ENCODE measurements at regions of chr7 and their contacts with region 1.

Region 1: DNA sequence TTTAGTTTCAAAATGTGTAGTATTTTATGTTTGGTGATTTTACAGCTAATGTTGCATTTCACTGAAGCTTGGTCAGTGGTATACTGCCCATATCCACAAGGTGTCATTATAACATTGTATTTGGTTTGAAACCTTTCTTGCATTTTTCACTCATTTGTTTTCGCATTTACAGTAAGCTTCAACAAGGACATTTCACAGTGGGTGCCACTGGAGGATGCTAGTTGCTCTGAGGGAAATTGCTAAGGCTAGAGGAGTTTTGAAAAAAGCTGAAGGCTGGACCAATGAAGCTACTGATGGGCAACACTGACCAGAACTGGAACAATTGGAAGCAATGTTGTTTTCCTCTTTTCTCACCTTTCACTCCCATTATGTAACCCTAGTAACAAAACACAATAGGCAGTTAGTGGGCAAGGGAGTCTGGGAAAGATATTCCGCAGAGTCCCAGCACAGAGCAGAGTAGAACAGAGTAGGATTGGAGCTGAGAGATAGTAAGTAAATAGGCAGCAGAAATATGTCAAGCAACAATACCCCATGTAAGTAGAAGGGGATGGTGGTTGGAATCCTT is 23.6 kb upstream of the SRI start:
- DNase-seq: peak; percentile 51
- H3K4me3 ChIP-seq: no peak overlapping the region; a peak in 1 of 4 replicates
- H3K27ac ChIP-seq: no peak overlapping the region
- H3K4me1 ChIP-seq: peaks cover 0 to 4% of the 10 kb centered on the region in 2 experiments; a peak in 2 of 4 replicates
- H3K27me3 ChIP-seq: no peaks in the 10 kb centered on the region
- CTCF ChIP-seq: peak; percentile 96
- EP300 ChIP-seq: no peak
- RAD21 ChIP-seq: peak; percentile 99

Region 2: DNA sequence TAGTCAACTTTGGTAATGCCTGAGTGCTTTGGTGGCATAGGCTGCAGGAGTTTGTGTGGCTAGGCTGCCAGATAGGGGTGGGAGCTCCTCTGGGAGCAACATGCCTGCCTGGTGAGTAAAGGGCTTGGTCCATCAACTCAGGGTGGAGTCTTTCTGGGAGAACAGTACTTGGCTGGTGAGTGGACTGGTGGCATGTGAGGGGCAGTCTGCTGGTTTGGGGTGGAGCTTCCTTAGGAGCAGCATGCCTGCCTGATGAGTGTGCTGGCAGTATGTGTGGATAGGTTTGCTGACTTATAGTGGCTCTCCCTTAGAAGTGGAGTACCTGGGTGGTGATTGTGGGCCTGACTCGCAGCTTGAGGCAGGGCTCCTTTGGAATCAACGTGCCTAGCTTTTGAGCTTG is 11.3 kb after region 1 on chr7:
- CTCF ChIA-PET with region 1: interaction called, 31 read pairs
- POLR2A ChIA-PET with region 1: no interaction called
- DNase-seq: no peak
- H3K4me3 ChIP-seq: no peak overlapping the region
- H3K27ac ChIP-seq: no peak overlapping the region
- H3K4me1 ChIP-seq: no peaks in the 10 kb centered on the region
- H3K27me3 ChIP-seq: no peaks in the 10 kb centered on the region
- CTCF ChIP-seq: no peak
- EP300 ChIP-seq: no peak
- RAD21 ChIP-seq: no peak

Region 3: DNA sequence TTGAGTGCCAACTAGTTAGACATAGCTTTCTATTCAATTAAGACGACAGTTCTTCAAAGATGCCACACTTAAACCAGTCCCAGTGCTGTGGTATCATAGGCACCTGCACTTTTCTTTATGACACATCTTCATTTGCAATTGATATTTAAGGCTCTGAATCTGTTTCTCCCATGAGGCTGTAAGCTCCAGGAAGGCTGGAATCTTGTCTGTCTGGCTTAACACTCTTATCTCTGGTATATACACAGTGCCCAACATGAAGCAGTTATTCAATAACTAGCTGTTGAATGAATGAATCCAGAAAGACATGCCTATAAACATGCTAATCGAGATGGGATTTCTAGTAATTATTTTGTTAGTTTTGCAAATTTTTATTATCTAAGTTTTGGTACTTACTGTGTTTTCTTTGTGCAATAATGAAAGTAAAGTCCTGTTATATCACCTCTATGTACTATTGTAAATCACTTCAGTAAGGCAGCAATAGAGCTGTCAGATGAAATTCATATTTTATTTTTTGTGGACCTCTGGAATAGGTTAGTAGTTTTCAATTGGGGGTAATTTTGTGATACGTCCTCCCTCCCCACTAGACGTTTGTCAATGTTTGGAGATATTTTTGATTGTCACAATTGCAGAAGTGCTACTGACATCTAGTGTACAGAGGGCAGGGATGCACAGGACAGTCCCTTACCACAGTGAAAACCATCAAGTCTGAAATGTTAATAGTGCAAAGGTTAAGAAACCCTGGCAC is 114.5 kb after region 1 on chr7:
- CTCF ChIA-PET with region 1: interaction called, 52 read pairs
- POLR2A ChIA-PET with region 1: no interaction called
- DNase-seq: peak; percentile 9
- H3K4me3 ChIP-seq: peak overlapping the region; percentile 16 to 19; a peak in 2 of 4 replicates
- H3K27ac ChIP-seq: no peak overlapping the region
- H3K4me1 ChIP-seq: no peaks in the 10 kb centered on the region; a peak in 2 of 4 replicates
- H3K27me3 ChIP-seq: no peaks in the 10 kb centered on the region
- CTCF ChIP-seq: peak; percentile 60
- EP300 ChIP-seq: no peak
- RAD21 ChIP-seq: peak; percentile 75

Region 4: DNA sequence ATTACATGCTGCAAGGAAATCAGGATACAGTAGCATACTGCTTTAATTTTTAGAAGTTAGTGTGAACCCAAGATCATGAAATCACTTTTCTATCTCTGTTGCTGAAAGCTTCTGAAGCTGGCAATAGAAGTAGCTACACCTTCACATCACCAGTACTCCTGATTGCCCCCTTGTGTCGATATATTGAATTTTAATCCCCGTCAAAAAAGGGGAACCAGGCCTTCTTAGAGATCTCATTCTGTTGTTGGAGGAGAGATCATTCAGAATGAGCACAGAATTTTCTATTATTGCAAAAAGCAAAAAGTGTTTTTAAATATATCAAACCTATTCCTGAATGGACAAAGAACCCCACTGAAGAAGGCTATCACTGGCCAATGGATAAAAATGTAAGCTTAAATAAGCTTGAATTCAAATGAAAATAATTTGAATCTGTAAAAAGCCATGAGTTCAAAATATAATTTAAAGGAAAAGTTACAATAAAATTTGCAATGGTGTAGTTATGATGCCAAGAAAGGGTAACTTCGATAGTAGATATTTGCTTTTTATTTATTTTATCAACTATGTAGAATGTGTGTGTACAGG is 591.8 kb after region 1 on chr7:
- CTCF ChIA-PET with region 1: interaction called, 25 read pairs
- POLR2A ChIA-PET with region 1: no interaction called
- DNase-seq: peak; percentile 39
- H3K4me3 ChIP-seq: no peak overlapping the region
- H3K27ac ChIP-seq: no peak overlapping the region
- H3K4me1 ChIP-seq: no peaks in the 10 kb centered on the region
- H3K27me3 ChIP-seq: no peaks in the 10 kb centered on the region
- CTCF ChIP-seq: peak; percentile 70
- EP300 ChIP-seq: no peak
- RAD21 ChIP-seq: peak; percentile 64

Measured in SK-N-SH (cell line).